ENCODE measurements at regions of chr11 and their contacts with region 1.

Region 1: GRCh38 chr11:7533199-7534041 is 19.6 kb downstream of the PPFIBP2 start:
- DNase-seq: no peak
- H3K4me3 ChIP-seq: peak overlapping the region; percentile 11
- H3K27ac ChIP-seq: peak overlapping the region; percentile 13
- H3K4me1 ChIP-seq: peaks cover 59% of the 10 kb centered on the region
- CTCF ChIP-seq: no peak

Region 2: DNA sequence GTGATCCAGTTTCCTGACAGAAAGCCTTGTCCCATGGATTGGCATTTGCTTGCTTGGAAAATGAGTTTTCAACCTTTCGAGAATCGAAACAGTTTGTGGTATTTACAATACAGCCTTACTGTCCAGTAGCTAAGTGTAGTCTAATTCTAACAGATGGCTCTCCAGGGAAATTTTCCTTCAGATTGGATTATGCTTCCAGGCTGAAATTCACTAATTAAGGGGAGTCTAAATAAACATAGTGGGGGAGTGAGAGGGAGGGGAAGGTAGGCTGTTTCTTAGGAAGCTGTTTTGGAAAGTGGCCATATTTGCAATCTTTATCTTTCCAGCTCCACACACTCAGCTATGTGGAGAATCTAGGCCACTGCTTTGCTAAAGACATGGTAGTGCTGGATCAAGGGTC is 200.5 kb before region 1 on chr11:
- CTCF ChIA-PET with region 1: no interaction called
- POLR2A ChIA-PET with region 1: no interaction called
- intact Hi-C with region 1: no loop called
- DNase-seq: no peak
- H3K4me3 ChIP-seq: no peak overlapping the region
- H3K27ac ChIP-seq: no peak overlapping the region
- H3K4me1 ChIP-seq: no peaks in the 10 kb centered on the region
- CTCF ChIP-seq: no peak

Region 3: GRCh38 chr11:7457211-7457610 is 76.2 kb before region 1 on chr11:
- CTCF ChIA-PET with region 1: no interaction called
- POLR2A ChIA-PET with region 1: no interaction called
- intact Hi-C with region 1: no loop called
- DNase-seq: no peak
- H3K4me3 ChIP-seq: no peak overlapping the region
- H3K27ac ChIP-seq: no peak overlapping the region
- H3K4me1 ChIP-seq: no peaks in the 10 kb centered on the region
- CTCF ChIP-seq: no peak

Region 4: GRCh38 chr11:7498193-7498592 is 35.2 kb before region 1 on chr11:
- CTCF ChIA-PET with region 1: no interaction called
- POLR2A ChIA-PET with region 1: no interaction called
- intact Hi-C with region 1: no loop called
- DNase-seq: no peak
- H3K4me3 ChIP-seq: no peak overlapping the region
- H3K27ac ChIP-seq: no peak overlapping the region
- H3K4me1 ChIP-seq: peaks cover 25% of the 10 kb centered on the region
- CTCF ChIP-seq: no peak

Region 5: GRCh38 chr11:7520981-7521487 is 12.4 kb before region 1 on chr11:
- CTCF ChIA-PET with region 1: interaction called, 6 read pairs
- POLR2A ChIA-PET with region 1: interaction called, 19 read pairs
- intact Hi-C with region 1: no loop called
- DNase-seq: peak; percentile 75
- H3K4me3 ChIP-seq: peak overlapping the region; percentile 55
- H3K27ac ChIP-seq: peak overlapping the region; percentile 97
- H3K4me1 ChIP-seq: peaks cover 99% of the 10 kb centered on the region
- CTCF ChIP-seq: no peak

Region 6: GRCh38 chr11:7548659-7549274 is 15.3 kb after region 1 on chr11:
- CTCF ChIA-PET with region 1: no interaction called
- POLR2A ChIA-PET with region 1: interaction called, 11 read pairs
- intact Hi-C with region 1: no loop called
- DNase-seq: peak; percentile 53
- H3K4me3 ChIP-seq: no peak overlapping the region
- H3K27ac ChIP-seq: no peak overlapping the region
- H3K4me1 ChIP-seq: peaks cover 17% of the 10 kb centered on the region
- CTCF ChIP-seq: peak; percentile 78

Region 7: GRCh38 chr11:7571640-7572000 is 38.2 kb after region 1 on chr11:
- CTCF ChIA-PET with region 1: no interaction called
- POLR2A ChIA-PET with region 1: no interaction called
- intact Hi-C with region 1: no loop called
- DNase-seq: peak; percentile 23
- H3K4me3 ChIP-seq: no peak overlapping the region
- H3K27ac ChIP-seq: no peak overlapping the region
- H3K4me1 ChIP-seq: no peaks in the 10 kb centered on the region
- CTCF ChIP-seq: peak; percentile 72

Measured in OCI-LY7 (cell line).